Activated T-helper 1 cell treated with anti-CD3 and anti-CD28 coated beads, Interleukin-12 subunit alpha, Interleukin-12 subunit beta, Interleukin-2, Interleukin-4 antibody, amounts not matched to agents 30 ng/mL and 10 ng/mL and 1 ng/mL, durations not matched to agents 14 hours and 24 hours and 36 hours (primary cell): ENCODE measurements at regions of chr20 and their contacts with region 1.

Region 1: GRCh38 chr20:3115190-3116107 is 30.9 kb upstream of the AVP start:
- DNase-seq: no peak
- H3K4me3 Mint-ChIP-seq: no peak overlapping the region
- H3K27ac Mint-ChIP-seq: no peak overlapping the region
- H3K4me1 Mint-ChIP-seq: peaks cover 5% of the 10 kb centered on the region
- H3K27me3 Mint-ChIP-seq: no peaks in the 10 kb centered on the region

Region 2: DNA sequence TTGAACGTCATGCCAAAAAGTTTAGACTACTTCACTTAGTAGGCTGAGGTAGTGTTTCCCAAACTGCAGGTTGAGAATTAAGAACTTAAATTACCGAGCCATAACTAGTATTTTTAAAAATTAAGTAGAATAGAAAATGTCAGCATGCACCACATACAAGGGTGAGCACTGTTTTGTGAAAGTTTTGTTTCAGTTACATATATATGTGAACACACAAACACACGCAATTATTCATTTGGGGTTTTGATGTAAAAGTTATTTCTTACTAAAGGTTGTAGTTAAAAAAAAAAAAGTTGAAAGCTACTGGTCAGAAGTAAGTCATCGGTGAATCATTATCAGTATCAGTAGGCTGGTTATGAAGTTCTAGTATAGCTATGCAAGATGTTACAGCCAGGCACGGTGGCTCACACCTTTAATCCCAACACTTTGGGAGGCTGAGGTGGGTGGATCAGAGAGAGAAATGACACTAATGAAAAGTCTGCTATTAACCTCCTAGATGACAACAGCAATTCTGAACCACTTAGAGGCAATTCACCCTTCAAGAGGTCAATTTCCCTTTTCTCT is 20.1 kb after region 1 on chr20:
- intact Hi-C with region 1: no loop called
- DNase-seq: no peak
- H3K4me3 Mint-ChIP-seq: no peak overlapping the region
- H3K27ac Mint-ChIP-seq: no peak overlapping the region
- H3K4me1 Mint-ChIP-seq: peaks cover 4% of the 10 kb centered on the region
- H3K27me3 Mint-ChIP-seq: no peaks in the 10 kb centered on the region

Region 3: DNA sequence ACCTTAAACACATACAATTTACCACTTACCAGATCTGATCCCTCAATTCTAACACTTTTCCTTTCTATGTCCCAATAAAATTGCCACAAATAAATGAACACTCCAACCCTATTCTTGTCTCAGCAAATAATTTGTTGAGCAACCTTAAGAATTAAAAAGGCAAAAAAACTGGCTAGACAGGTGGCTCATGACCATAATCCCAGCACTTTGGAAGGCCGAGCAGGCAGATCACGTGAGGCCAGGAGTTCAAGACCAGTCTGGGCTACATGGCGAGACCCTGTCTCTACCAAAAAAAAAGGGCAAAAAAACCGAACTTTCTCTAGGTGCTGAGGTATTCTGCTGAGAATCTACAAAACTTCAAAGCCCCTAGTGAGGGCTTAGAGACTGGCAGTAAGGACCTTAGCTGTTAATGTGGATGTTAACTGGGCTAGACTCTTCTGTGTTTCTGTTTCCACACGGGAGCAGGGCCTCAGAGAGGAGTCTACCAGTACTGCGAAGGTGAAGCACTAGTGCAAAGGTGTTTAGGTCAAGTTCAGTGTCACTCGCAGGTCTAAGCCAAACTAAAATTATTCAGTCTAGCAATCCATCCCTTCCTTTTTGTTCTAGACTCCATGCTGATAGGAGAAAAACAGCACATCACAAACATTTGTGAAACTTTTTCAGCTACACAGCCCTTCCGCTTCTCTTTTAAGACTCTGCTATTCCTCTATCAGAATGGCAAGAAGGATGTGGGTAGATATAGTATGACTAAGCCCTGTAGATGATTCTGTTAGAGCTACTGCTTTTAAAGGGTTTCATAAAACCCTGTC is 41.6 kb after region 1 on chr20:
- intact Hi-C with region 1: no loop called
- DNase-seq: no peak
- H3K4me3 Mint-ChIP-seq: peak overlapping the region; percentile 78
- H3K27ac Mint-ChIP-seq: peak overlapping the region; percentile 90
- H3K4me1 Mint-ChIP-seq: peaks cover 44% of the 10 kb centered on the region
- H3K27me3 Mint-ChIP-seq: no peaks in the 10 kb centered on the region

Region 4: GRCh38 chr20:3316136-3316535 is 200.7 kb after region 1 on chr20:
- intact Hi-C with region 1: loop called (anchors 1 kb)
- DNase-seq: no peak
- H3K4me3 Mint-ChIP-seq: no peak overlapping the region
- H3K27ac Mint-ChIP-seq: no peak overlapping the region
- H3K4me1 Mint-ChIP-seq: no peaks in the 10 kb centered on the region
- H3K27me3 Mint-ChIP-seq: peaks cover 2% of the 10 kb centered on the region